OCI-LY7 (cell line): ENCODE measurements at regions of chr1 and their contacts with region 1.

Region 1: DNA sequence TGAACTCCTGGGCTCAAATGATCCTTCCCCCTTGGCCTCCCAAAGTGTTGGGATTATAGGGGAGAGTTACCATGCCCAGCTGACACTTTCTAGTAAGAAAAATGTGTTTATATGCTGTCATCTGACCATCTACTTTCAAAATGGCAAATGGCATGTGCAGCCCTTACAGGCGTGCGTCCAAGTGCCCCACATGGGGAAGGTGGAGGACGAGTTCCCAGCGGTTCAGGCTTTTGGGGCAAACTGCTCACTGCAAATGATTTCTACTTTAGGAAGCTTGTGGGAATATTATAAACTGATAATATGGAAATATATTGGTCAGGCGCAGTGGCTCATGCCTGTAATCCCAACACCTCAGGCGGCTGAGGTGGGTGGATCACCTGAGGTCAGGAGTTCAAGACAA is 41.5 kb upstream of the NADK start:
- DNase-seq: no peak
- H3K4me3 ChIP-seq: no peak overlapping the region
- H3K27ac ChIP-seq: peak overlapping the region; percentile 31
- H3K4me1 ChIP-seq: peaks cover 42% of the 10 kb centered on the region
- CTCF ChIP-seq: no peak

Region 2: DNA sequence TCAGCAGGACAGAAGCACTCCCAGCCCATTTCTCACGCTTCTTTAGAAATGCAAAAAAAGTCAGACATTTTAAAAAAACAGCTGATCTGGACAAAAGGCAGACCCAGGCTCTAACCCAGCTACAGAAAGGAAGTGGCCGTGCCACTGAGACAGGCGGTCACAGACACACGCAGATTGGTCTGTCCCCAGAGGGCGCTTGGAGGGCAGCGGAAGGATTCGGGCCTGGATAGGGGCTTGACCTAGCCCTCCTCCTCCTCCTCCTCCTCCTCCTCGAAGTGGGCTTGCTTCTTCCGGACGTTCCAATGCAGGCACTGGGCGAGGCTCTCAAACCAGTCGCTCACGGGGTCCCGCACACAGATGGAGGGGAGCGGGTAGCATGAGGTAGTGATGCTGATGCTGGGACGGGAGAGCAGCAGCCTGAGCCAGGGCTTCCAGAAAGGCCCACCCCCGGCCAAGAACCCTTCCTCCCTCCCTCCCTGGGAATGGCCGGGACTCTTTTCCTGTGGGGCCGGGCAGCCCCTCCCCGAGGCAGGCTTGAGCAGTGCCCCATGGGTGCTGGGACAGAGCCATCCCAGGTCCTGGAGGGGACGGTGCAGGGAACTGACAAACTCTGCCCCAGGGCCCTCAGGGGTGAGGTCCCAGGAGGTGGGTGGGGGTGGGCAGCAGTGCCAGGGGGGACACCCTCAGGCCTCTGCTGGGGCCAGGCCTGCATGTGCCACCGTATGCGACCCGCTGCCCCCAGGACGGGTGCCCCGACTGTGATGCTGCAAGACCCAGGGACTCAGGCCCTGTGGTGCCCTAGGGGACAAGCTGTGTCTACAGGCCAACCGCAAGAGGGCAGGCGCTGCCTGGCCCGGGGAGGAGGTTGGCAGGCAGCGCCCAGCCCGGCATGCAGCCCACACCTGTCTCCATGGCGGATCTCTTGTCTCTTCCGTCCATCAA is 66.8 kb before region 1 on chr1:
- CTCF ChIA-PET with region 1: no interaction called
- POLR2A ChIA-PET with region 1: no interaction called
- intact Hi-C with region 1: no loop called
- DNase-seq: no peak
- H3K4me3 ChIP-seq: no peak overlapping the region
- H3K27ac ChIP-seq: no peak overlapping the region
- H3K4me1 ChIP-seq: peaks cover 11% of the 10 kb centered on the region
- CTCF ChIP-seq: no peak

Region 3: GRCh38 chr1:1806890-1807289 is 12.9 kb before region 1 on chr1:
- CTCF ChIA-PET with region 1: no interaction called
- POLR2A ChIA-PET with region 1: interaction called, 10 read pairs
- intact Hi-C with region 1: no loop called
- DNase-seq: no peak
- H3K4me3 ChIP-seq: no peak overlapping the region
- H3K27ac ChIP-seq: no peak overlapping the region
- H3K4me1 ChIP-seq: peaks cover 1% of the 10 kb centered on the region
- CTCF ChIP-seq: no peak